ENCODE measurements at regions of chr3 and their contacts with region 1.

Region 1: DNA sequence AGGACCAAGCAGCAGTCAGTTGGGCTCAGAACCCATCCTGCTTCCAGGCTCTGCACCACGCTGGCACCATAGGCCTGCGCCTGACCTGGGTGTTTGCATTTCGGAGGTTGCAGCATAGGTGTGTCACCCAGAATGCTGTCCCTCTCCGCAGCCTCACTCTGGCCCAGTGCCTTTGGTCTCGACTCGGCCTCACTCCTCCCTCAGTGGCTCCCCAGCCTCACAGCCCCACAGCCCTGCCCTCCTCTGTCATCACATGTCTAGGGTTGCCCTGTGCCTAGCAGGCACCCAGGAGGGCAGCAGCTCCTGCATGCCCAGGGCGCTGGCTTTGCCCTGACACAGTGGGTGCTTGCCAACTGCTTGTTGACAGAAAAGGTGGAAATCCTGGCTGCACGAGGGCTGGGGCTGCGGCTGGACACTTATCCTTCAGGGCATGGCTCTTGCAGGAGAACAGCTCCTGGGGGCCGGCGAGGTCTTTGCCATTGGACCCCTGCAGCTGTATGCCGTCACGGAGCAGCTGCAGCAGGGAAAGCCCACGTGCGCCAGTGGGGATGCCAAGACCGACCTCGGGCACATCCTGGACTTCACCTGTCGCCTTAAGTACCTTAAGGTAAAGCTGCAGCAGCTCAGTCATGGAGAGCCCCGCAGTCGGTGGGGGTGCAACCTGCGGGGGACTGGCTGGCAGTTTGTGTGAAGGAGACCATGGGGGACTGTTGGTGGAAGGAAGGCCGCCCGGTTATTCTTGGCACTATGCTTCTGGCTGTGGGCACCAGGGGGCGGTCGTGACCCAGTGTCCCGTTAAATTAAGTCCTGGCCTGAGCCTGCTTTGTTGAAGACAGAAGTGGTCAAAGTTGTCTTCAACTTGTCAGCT is 16.2 kb downstream of the NISCH start:
- DNase-seq: peak; percentile 88
- ATAC-seq: peak; percentile 87
- H3K4me3 ChIP-seq: no peak overlapping the region
- H3K27ac ChIP-seq: no peak overlapping the region
- H3K4me1 ChIP-seq: peaks cover 20% of the 10 kb centered on the region
- H3K27me3 ChIP-seq: no peaks in the 10 kb centered on the region
- CTCF ChIP-seq: peak; percentile 71

Region 2: DNA sequence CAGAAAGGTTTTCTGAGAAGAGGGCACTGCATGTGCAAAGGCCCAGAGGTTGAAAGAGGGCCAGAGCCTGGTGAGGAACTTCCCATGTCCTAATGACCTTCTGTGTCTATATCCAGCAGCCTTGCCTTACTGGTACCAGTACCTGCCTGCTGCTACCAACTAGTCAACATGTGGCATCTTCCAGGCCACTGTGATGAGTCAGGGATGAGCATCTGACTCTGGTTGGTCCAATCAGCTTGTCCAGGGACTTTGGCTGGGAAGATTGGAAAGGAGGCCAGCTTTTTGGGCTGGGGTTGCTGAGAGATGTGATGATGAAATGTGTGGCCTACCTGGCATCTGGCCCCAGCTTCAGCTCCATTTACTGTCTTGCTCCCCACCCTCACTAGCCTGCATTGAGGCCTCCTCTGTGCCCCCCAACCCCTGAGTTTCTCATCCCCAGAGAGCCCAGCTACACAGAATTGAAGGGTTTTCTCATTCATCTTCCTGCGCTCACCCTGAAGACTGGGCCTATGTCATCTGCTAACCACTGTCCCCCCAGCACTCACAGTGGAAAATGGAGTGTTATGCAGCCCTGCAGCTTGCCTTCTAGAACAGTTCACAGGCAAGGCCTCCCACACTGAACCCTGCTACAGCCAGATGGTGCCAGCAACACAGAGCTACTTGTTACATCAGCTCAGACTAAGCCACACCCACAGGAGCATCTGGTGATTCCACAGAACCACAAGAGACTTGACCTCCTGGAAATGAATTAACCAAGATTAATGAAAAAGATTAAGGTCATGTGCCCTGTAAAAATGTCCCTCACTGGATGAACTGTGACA is 231.3 kb before region 1 on chr3:
- intact Hi-C with region 1: no loop called
- DNase-seq: peak; percentile 67
- ATAC-seq: peak; percentile 34
- H3K4me3 ChIP-seq: peak overlapping the region; percentile 74
- H3K27ac ChIP-seq: peak overlapping the region; percentile 84
- H3K4me1 ChIP-seq: peaks cover 45% of the 10 kb centered on the region
- H3K27me3 ChIP-seq: no peaks in the 10 kb centered on the region
- CTCF ChIP-seq: no peak

Region 3: GRCh38 chr3:52529376-52530333 is 58.0 kb after region 1 on chr3:
- intact Hi-C with region 1: loop called (anchors 10 kb)
- DNase-seq: peak; percentile 54
- ATAC-seq: no peak
- H3K4me3 ChIP-seq: no peak overlapping the region
- H3K27ac ChIP-seq: peak overlapping the region; percentile 55
- H3K4me1 ChIP-seq: peaks cover 64% of the 10 kb centered on the region
- H3K27me3 ChIP-seq: no peaks in the 10 kb centered on the region
- CTCF ChIP-seq: no peak